Psoas muscle (tissue), 8 donors: ENCODE measurements at regions of chr22 and their contacts with region 1.

Region 1: DNA sequence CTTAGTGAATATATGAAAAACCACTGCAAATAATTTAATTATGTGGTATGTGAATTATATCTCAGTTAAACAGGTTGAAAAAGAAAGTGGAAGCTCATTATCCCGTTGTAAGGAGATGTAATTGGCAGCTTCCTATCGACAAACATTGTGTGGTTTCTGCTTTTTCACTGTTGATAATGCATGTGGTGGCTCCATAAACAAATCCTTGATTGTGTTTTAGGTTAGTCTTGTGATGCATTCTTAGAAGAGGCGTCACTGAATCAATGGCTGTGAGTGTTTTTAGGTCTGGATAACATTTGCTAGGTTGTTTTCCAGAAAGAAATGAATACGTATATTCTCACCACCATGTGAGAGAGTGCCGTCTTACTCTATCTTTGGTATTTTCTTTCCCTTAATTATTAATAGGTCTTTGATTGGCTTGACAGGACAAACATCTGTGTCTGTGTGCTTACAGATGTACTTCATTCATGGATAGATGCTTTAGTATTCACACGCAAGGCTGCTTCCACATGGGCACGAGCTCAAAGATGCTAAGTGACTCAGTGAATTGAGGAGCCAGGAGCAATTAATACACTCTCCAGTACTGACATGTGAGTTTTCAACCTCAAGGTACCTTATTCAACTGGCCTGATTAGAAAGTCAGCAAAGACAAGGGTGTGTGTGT is 166.7 kb downstream of the TBC1D22A start:
- DNase-seq: no peak
- ATAC-seq: no peak
- H3K4me3 ChIP-seq: no peak overlapping the region
- H3K27ac ChIP-seq: no peak overlapping the region
- H3K4me1 ChIP-seq: no peaks in the 10 kb centered on the region
- H3K27me3 ChIP-seq: no peaks in the 10 kb centered on the region
- CTCF ChIP-seq: no peak

Region 2: GRCh38 chr22:46878191-46878948 is 50.8 kb before region 1 on chr22:
- intact Hi-C with region 1: loop called in 1 of 2 experiments (anchors 10 kb)
- DNase-seq: no peak
- ATAC-seq: no peak
- H3K4me3 ChIP-seq: no peak overlapping the region
- H3K27ac ChIP-seq: no peak overlapping the region
- H3K4me1 ChIP-seq: no peaks in the 10 kb centered on the region
- H3K27me3 ChIP-seq: no peaks in the 10 kb centered on the region
- CTCF ChIP-seq: no peak

Region 3: DNA sequence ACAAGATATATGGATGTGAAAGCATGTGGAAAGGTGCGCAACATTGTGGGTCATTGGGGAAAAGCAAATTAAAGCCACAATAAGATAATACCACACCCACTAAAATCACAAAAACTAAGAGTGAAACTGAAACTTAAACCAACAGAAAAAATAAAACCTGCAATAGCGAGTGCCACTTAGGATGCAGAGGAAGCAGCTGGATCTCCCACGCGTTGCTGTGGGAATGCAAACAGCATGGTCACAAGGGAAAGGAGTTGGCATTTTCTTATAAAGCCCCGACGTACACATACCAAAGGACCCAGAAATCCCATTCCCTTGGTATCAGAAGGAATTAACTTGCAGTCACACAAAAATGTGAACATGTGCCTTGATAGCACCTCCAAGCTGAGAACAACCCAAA is 545.3 kb after region 1 on chr22:
- intact Hi-C with region 1: loop called in 1 of 2 experiments (anchors 10 kb)
- DNase-seq: no peak
- ATAC-seq: no peak
- H3K4me3 ChIP-seq: no peak overlapping the region
- H3K27ac ChIP-seq: no peak overlapping the region
- H3K4me1 ChIP-seq: no peaks in the 10 kb centered on the region
- H3K27me3 ChIP-seq: peaks cover 0 to 2% (median 0%) of the 10 kb centered on the region in 3 donors
- CTCF ChIP-seq: no peak